Sigmoid colon (tissue), 7 donors: ENCODE measurements at regions of chr9 and their contacts with region 1.

Region 1: DNA sequence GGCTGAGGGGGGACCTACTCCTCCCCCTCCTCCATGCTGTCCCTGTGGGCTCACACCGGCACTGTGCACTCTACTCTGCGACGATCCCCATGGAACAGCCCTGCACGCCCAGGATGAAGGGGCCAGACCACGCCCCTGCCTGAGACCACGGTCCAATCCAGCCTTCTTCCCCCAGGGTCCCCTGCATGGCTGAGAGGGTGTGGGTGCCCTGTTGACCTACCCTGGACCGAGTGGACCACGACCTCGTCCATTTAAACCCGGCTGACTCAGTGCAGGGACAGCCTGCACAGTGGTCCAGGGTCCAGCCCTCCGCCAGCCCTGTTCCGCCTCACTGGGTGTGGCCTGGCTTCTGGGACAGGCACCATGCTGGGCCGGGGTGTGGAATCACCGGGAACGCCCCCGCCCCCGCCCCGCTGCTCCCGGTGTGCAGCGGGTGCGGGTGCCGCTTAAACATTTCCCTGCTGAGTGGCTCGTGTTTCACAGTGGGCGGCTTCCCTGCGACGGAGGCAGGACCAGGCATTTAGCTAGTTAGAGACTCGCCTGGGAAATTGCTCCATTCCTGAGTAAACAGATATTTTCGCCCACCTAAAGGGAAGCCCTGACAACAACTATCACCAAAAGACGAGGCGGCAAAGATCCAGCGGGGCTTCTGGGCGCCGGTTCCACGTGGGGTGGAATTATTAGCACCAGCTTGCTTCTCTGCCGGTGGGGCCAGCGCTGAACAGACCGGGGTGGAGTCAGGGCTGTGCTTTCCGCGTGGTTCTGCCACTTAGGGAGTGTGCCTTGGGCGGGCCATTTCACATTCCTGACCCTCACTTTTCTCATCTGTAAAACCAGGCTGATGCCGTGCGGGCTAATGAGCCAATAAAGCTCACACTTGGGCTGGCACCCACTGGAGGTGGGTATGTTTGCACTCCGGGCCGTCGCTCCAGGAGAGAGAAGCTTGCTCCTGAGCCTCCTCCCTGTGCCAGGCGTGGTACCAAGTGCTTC is 22.6 kb downstream of the DBH start:
- DNase-seq: no peak
- H3K4me3 ChIP-seq: peak overlapping the region in 3 of 4 donors; percentile 20 to 31 (median 23)
- H3K27ac ChIP-seq: no peak overlapping the region
- H3K4me1 ChIP-seq: peaks cover 0 to 19% (median 16%) of the 10 kb centered on the region in 4 donors
- H3K27me3 ChIP-seq: peaks cover 0 to 86% (median 33%) of the 10 kb centered on the region in 3 donors
- CTCF ChIP-seq: no peak
- EP300 ChIP-seq: no peak
- POLR2A ChIP-seq: no peak

Region 2: DNA sequence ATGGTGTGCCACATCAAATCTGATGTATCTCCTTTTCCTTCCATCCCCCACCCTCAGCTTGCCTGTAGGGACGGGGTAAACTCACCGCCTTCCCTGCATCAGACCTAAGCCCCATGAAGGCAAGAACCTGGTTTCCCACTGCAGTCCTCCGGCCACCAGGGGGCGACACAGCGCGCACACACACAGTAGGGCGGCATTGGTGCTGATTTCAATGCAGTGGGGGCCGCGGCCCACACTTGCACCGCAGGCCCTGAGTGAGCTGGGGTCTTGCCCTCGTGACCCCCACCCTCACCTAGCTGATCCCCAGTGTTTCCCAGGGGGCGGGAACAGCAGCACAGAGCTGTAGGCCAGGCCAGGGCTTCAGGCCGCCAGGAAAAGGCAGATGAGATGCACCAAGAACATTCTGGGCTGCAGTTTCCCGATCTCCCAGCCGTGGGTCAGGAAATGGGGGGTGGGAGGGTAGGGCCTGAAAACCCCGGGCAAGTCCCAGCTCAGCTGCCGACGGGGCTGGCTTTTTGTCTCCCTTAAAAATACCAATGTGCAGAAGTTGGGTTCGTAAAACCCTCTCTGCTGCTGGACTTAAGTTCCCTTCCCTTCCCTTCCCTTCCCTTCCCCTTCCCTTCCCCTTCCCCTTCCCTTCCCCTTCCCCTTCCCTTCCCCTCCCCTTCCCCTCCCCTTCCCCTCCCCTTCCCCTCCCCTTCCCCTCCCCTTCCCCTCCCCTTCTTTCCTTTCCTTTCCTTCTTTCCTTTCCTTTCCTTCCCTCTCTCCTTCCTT is 69.1 kb before region 1 on chr9:
- intact Hi-C with region 1: loop called (anchors 5 kb)
- DNase-seq: no peak
- H3K4me3 ChIP-seq: no peak overlapping the region
- H3K27ac ChIP-seq: no peak overlapping the region
- H3K4me1 ChIP-seq: peaks cover 0 to 19% (median 15%) of the 10 kb centered on the region in 4 donors
- H3K27me3 ChIP-seq: peaks cover 0 to 43% (median 7%) of the 10 kb centered on the region in 3 donors
- CTCF ChIP-seq: peak in 1 of 4 experiments; percentile 9
- EP300 ChIP-seq: no peak
- POLR2A ChIP-seq: no peak